ENCODE measurements at regions of chr10 and their contacts with region 1.

Region 1: DNA sequence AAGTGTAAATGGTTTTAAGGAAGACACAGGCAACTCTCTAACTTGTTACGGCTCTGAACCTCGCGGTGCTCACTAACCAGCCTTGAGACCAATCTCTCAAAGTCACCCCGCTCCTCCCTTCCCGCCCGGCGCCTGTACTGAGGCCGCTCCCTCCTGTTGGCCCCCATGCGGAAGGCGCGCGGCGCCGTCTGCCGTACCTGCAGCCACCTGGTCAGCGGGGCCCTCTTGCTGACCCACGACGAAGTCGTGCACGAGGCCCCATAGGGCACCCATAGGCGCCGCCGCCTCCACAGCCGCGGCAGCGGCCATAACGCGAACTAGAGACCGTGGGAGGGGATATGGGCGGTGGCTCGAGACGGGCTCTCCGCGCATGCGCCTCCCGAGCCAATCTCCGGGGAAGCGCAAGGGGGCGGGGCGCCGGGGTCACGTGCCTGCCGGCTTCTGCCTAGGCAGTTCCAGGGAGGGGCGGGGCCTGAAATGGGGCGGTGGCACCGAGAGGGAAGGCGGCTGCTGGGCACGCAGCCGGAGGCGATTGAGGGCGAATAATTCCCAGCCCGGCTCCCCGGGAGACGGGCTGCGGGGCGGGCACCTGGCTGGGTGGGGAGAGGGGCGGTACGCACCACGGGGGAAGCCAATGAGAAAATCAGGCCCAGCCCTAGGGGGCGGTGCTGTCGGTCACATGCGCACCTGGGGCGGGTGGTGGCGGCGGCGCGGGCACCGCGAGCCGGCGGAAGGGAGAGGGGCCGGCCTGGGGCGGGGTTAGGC is at the start of gene MMS19:
- DNase-seq: peak; percentile 96 to 100
- H3K4me3 ChIP-seq: peak within 1 kb of the TSS; percentile 75 to 87
- H3K27ac ChIP-seq: peak within 1 kb of the TSS; percentile 94 to 98
- H3K4me1 ChIP-seq: peaks cover 0 to 13% of the 10 kb centered on the region in 2 donors
- H3K27me3 ChIP-seq: no peaks in the 10 kb centered on the region
- CTCF ChIP-seq: no peak
- total RNA-seq, gene MMS19: 34.0 TPM

Region 2: GRCh38 chr10:97307866-97308780 is 190.1 kb before region 1 on chr10:
- intact Hi-C with region 1: no loop called
- DNase-seq: no peak
- H3K4me3 ChIP-seq: no peak overlapping the region
- H3K27ac ChIP-seq: peak overlapping the region in 1 of 2 donors; percentile 52
- H3K4me1 ChIP-seq: peaks cover 0 to 5% of the 10 kb centered on the region in 2 donors
- H3K27me3 ChIP-seq: no peaks in the 10 kb centered on the region
- CTCF ChIP-seq: no peak

Region 3: DNA sequence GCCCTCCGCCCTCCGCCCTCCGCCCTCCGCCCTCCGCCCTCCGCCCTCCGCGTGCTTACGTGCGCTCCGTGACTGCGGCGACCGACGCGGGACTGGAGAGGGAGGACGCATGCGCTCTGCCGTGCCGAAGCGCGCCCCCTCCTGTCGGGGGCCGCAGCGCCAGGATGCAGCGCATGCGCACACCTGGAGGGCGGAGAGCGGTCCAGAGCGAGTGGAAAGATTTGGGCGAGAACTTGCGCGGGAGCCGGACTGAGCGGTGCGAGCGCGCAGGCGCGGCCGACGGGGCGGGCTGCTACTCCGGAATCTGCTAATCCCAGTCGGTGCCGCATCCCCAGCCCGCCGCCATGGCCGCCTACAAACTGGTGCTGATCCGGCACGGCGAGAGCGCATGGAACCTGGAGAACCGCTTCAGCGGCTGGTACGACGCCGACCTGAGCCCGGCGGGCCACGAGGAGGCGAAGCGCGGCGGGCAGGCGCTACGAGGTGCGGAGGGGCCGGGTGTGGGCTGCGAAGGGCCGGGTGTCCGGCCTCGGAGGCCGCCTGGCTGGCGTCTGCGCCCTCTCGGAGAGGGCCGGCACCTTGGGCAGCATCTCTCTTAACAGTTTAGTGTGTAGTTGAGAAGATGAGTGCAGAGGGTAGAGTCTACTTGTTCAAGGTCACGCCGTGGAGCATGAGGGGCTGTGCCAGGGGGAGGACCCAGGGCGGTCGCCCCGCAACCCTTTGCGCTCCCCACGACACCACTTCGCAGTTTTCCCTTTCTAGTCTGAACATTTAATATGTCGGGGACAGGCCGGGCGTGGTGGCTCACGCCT is 72.1 kb before region 1 on chr10 and contains the start of gene PGAM1:
- intact Hi-C with region 1: loop called (anchors 2 kb)
- DNase-seq: peak; percentile 85 to 97
- H3K4me3 ChIP-seq: peak within 1 kb of the TSS; percentile 75 to 97
- H3K27ac ChIP-seq: peak within 1 kb of the TSS; percentile 86 to 89
- H3K4me1 ChIP-seq: peaks cover 9 to 17% of the 10 kb centered on the region in 2 donors
- H3K27me3 ChIP-seq: no peaks in the 10 kb centered on the region
- CTCF ChIP-seq: peak; percentile 60 to 72 (median 69)
- total RNA-seq, gene PGAM1: 171 TPM

Region 4: GRCh38 chr10:97463363-97464132 is 34.7 kb before region 1 on chr10:
- intact Hi-C with region 1: loop called (anchors 2 kb)
- DNase-seq: no peak
- H3K4me3 ChIP-seq: no peak overlapping the region
- H3K27ac ChIP-seq: peak overlapping the region; percentile 34 to 49
- H3K4me1 ChIP-seq: no peaks in the 10 kb centered on the region
- H3K27me3 ChIP-seq: no peaks in the 10 kb centered on the region
- CTCF ChIP-seq: peak; percentile 74 to 85 (median 78)

Region 5: GRCh38 chr10:97475936-97476594 is 22.2 kb before region 1 on chr10:
- intact Hi-C with region 1: no loop called
- DNase-seq: no peak
- H3K4me3 ChIP-seq: no peak overlapping the region
- H3K27ac ChIP-seq: no peak overlapping the region
- H3K4me1 ChIP-seq: no peaks in the 10 kb centered on the region
- H3K27me3 ChIP-seq: no peaks in the 10 kb centered on the region
- CTCF ChIP-seq: no peak

Region 6: DNA sequence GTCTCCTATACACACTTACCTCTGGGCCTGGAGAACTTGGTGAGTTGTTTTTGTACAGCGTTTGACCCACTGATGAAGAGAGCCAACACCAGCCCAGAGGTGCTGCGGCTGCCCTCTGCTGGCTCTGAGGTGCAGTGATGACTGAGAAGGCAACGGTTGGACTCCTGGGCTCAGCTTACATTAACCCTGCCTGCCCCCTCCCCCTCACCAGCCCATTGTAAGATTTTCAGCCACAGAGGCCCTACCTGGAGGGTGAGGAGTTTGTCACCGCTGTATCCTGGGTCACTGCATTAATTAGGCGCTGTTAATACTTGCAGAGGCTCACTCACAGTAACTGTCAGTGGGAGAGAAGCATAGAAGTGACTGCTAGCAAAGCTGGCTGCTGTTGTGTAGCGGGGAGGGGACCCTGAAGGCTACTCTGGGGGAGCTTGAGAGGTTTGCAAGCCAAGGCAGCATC is 55.3 kb after region 1 on chr10:
- intact Hi-C with region 1: loop called (anchors 1 kb)
- DNase-seq: peak in 1 of 2 donors; percentile 80
- H3K4me3 ChIP-seq: no peak overlapping the region
- H3K27ac ChIP-seq: no peak overlapping the region
- H3K4me1 ChIP-seq: peaks cover 0 to 8% of the 10 kb centered on the region in 2 donors
- H3K27me3 ChIP-seq: no peaks in the 10 kb centered on the region
- CTCF ChIP-seq: peak; percentile 76 to 86 (median 83)

Region 7: GRCh38 chr10:97686962-97687784 is 188.9 kb after region 1 on chr10 and contains the start of gene AVPI1:
- intact Hi-C with region 1: loop called (anchors 2 kb)
- DNase-seq: peak; percentile 93 to 99
- H3K4me3 ChIP-seq: peak within 1 kb of the TSS; percentile 75 to 93
- H3K27ac ChIP-seq: peak within 1 kb of the TSS; percentile 92 to 94
- H3K4me1 ChIP-seq: peaks cover 10 to 45% of the 10 kb centered on the region in 2 donors
- H3K27me3 ChIP-seq: no peaks in the 10 kb centered on the region
- CTCF ChIP-seq: no peak
- total RNA-seq, gene AVPI1: 23.7 TPM

Region 8: DNA sequence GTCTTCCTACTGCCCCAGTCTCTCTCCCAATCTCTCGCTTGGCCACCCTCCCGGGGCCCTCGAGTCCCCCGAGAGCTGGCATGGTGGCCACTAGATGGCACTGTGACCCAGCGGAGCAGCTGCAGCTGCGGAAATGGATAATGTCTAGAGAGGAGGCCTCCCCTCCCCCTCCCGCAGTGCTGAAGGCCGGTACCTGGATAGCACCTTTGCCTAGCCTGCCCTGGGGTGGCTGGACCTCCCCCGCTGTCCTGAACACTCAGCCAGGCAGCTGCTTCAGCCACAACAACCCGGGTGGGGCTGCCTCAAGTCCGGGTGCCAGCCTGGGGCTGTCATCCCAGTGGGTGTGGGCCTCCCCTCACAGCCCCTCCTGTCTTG is 416.6 kb after region 1 on chr10:
- intact Hi-C with region 1: no loop called
- DNase-seq: peak in 1 of 2 donors; percentile 73
- H3K4me3 ChIP-seq: no peak overlapping the region
- H3K27ac ChIP-seq: no peak overlapping the region
- H3K4me1 ChIP-seq: no peaks in the 10 kb centered on the region
- H3K27me3 ChIP-seq: no peaks in the 10 kb centered on the region
- CTCF ChIP-seq: peak; percentile 60 to 87 (median 83)

Measured in ascending aorta (tissue), 2 donors.